ENCODE measurements at regions of chr17 and their contacts with region 1.

Region 1: DNA sequence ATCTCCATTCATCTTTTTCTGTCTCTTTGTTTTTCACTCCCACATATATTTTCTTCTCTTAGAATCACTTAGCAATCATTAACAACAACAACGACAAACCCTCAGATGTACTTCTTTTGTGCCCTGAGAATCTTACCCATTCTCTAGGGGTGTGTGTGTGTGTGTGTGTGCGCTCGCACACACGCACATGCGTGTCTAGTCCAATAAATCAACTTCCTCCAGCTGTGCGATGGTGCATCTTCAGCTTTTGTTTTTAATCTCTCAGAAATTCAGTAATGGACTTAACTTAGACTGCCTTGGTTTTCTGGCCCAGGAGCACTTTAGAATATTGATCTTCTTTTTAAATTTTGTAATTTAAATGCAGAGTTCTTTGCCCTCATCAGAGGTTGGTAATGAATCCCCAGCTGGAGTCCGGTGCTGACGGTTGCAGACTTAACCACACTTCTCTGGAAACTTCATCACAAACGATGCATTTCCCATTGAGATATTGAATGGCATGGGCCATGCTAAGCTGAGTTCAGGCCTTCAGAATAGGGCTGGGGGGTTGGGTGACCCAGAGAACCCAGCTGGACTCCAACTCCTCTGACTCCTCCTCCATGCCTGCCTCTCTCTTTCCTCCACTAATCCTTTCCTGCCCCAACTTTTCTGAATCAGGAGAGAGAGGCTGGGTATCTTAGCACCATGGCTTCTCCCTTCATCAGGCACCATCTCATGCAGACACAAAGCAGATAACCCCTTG is 193.9 kb downstream of the ZNF18 start:
- DNase-seq: no peak
- ATAC-seq: no peak
- H3K4me3 ChIP-seq: no peak overlapping the region
- H3K27ac ChIP-seq: no peak overlapping the region
- H3K4me1 ChIP-seq: no peaks in the 10 kb centered on the region
- H3K27me3 ChIP-seq: no peaks in the 10 kb centered on the region
- CTCF ChIP-seq: no peak
- POLR2A ChIP-seq: no peak

Region 2: DNA sequence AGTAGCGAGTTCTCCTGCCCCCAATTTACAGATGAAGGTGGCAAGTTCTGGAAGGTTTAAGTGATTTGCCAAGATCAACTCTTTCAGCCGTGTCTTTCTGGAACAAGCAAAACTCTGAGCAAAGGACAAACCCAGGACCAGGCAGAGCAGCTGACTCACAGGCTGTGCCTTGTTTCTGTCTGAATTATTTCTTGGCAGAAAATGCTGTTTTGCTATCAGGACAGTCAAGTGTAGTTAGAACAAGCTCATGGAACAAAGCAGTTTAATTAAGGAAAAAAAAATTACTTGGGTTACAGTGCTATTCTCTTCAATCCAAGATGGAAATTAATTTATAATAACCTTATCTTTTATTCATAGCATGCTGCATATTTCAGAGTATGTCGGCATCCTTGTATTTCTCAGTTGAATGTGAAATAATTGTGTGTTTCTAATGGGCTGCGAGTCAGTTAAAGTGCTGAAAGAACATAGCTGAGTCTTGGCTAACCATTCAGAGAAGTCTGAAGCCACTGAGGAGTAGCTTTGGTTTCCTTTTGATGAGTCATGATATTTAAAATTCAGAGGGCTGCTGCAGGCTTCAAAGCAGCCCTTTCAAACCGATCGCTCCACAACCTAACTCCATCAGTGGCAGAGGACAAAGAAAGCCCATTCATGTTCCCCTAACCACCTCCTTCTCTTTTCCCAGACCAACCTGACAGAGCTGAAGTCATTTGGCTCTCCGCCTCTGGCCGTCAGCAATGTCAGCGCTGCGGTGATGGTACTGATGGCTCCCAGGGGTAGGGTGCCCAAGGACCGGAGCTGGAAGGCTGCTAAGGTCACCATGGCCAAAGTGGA is 50.1 kb after region 1 on chr17:
- intact Hi-C with region 1: loop called in 1 of 2 experiments (anchors 10 kb)
- DNase-seq: no peak
- ATAC-seq: no peak
- H3K4me3 ChIP-seq: no peak overlapping the region
- H3K27ac ChIP-seq: no peak overlapping the region
- H3K4me1 ChIP-seq: no peaks in the 10 kb centered on the region
- H3K27me3 ChIP-seq: no peaks in the 10 kb centered on the region
- CTCF ChIP-seq: no peak
- POLR2A ChIP-seq: no peak

Measured in right lobe of liver (tissue), 6 donors.